HepG2 (cell line): ENCODE measurements at regions of chr1 and their contacts with region 1.

Region 1: GRCh38 chr1:27662707-27663393 is 9.1 kb downstream of the IFI6 start:
- DNase-seq: peak; percentile 73
- ATAC-seq: peak; percentile 83
- H3K4me3 ChIP-seq: peak overlapping the region in 2 of 3 experiments; percentile 7 to 35; a peak in 1 of 6 replicates
- H3K27ac ChIP-seq: no peak overlapping the region
- H3K4me1 ChIP-seq: peaks cover 32% of the 10 kb centered on the region
- H3K27me3 ChIP-seq: peaks cover 1 to 6% of the 10 kb centered on the region in 2 experiments; a peak in 1 of 5 replicates
- CTCF ChIP-seq: peak; percentile 88
- EP300 ChIP-seq: no peak
- POLR2A ChIP-seq: no peak
- RAD21 ChIP-seq: peak; percentile 93

Region 2: GRCh38 chr1:27616441-27616840 is 46.4 kb before region 1 on chr1:
- CTCF ChIA-PET with region 1: no interaction called
- POLR2A ChIA-PET with region 1: interaction called, 3 read pairs
- in situ Hi-C with region 1: loop called (anchors 5 kb)
- intact Hi-C with region 1: no loop called
- DNase-seq: no peak
- ATAC-seq: peak; percentile 26; the same call in 2 of the 3 replicates
- H3K4me3 ChIP-seq: no peak overlapping the region
- H3K27ac ChIP-seq: no peak overlapping the region
- H3K4me1 ChIP-seq: peaks cover 31% of the 10 kb centered on the region
- H3K27me3 ChIP-seq: peaks cover 0 to 16% of the 10 kb centered on the region in 2 experiments; a peak in 3 of 5 replicates
- CTCF ChIP-seq: peak; percentile 26; the same call in 1 of the 2 replicates
- EP300 ChIP-seq: no peak
- POLR2A ChIP-seq: no peak
- RAD21 ChIP-seq: no peak

Region 3: DNA sequence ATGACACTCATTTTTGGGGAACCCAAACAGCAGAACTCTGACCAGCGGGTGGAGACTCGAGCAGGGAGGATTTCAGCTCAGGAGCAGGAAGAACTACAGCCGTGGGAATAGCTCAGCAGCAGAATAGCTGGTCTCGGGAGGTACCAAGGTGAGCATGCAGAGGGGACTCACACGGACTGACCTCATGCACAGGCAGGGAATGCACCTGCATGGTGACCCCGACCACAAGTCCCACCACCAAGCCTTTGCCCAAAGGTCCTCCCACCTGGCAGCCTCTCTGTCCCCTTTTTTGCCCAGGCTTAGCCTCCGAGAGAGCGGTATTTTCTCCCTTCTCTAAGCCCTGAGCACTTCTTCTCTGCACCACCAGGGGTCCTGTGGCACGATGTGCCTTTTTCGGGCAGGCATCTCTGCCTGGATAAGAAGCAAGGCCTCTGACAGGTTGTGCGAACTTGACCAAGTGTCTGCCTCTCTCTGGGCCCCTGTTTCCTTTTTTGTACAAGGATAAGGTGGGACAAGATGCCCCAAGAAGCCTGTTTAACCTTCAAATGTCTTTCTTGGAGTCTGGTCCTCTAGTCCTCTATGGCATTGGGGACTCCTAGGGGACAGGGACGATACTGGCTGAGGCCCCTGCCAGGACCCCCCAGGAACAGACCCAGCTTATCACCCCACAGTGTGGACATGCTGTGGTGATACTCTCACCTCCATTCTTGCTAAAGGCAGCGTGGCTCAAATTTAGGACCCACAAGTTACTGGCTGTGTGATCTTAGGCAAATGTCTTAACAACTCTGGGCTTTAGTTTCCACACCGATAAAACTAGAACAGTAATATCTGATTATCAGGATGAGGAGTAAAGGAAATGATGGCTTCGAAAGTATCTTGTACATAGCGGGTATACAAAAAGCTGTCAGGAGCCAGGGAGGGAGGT is 18.9 kb before region 1 on chr1:
- CTCF ChIA-PET with region 1: interaction called, 24 read pairs
- POLR2A ChIA-PET with region 1: no interaction called
- in situ Hi-C with region 1: no loop called
- intact Hi-C with region 1: no loop called
- DNase-seq: peak; percentile 55
- ATAC-seq: peak; percentile 89
- H3K4me3 ChIP-seq: no peak overlapping the region; a peak in 1 of 6 replicates
- H3K27ac ChIP-seq: no peak overlapping the region
- H3K4me1 ChIP-seq: 0 out of 2 replicates have a peak, but pooled peaks cover 6% of the 10 kb centered on the region
- H3K27me3 ChIP-seq: peaks cover 1 to 13% of the 10 kb centered on the region in 2 experiments; a peak in 1 of 5 replicates
- CTCF ChIP-seq: peak; percentile 79
- EP300 ChIP-seq: no peak
- POLR2A ChIP-seq: no peak
- RAD21 ChIP-seq: peak; percentile 42; the same call in 1 of the 2 replicates